HCT116 (cell line): ENCODE measurements at regions of chr10 and their contacts with region 1.

Region 1: DNA sequence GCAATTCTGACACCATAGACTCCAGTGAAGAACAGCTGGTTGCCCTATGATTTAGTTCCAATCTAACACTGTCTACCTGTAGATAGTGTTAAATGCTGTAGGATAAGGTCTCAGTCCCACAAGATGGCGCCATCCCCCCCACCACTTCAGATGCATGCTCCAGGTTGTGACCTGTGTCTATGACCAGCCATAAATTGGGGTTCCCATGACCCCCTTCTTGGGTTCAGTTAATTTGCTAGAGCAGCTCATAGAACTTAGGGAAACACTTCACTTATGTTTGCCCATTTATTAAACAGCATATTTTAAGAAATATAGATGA is 13.1 kb downstream of the CCSER2 start:
- DNase-seq: no peak
- ATAC-seq: peak; percentile 76
- H3K4me3 ChIP-seq: no peak overlapping the region
- H3K27ac ChIP-seq: no peak overlapping the region
- H3K4me1 ChIP-seq: no peaks in the 10 kb centered on the region
- H3K27me3 ChIP-seq: no peaks in the 10 kb centered on the region
- CTCF ChIP-seq: peak in 2 of 3 experiments; percentile 21 to 40; a peak in 3 of 6 replicates
- POLR2A ChIP-seq: no peak
- RAD21 ChIP-seq: no peak

Region 2: GRCh38 chr10:84352251-84352842 is 10.8 kb after region 1 on chr10:
- CTCF ChIA-PET with region 1: interaction called, 11 read pairs
- POLR2A ChIA-PET with region 1: no interaction called
- RAD21 ChIA-PET with region 1: no interaction called
- intact Hi-C with region 1: no loop called
- DNase-seq: peak; percentile 53
- ATAC-seq: peak; percentile 97
- H3K4me3 ChIP-seq: no peak overlapping the region
- H3K27ac ChIP-seq: no peak overlapping the region
- H3K4me1 ChIP-seq: peaks cover 0 to 4% of the 10 kb centered on the region in 2 experiments; a peak in 2 of 4 replicates
- H3K27me3 ChIP-seq: no peaks in the 10 kb centered on the region
- CTCF ChIP-seq: peak; percentile 51 to 93 (median 80); a peak in 5 of 6 replicates
- POLR2A ChIP-seq: no peak
- RAD21 ChIP-seq: peak; percentile 62